T-cell (primary cell): ENCODE measurements at regions of chr5 and their contacts with region 1.

Region 1: GRCh38 chr5:97009212-97009898 is 73.5 kb downstream of the LNPEP start:
- DNase-seq: peak in 2 of 35 experiments; percentile 0 to 68
- ATAC-seq: peak; percentile 55 to 80 (median 76)
- H3K4me3 ChIP-seq: no peak overlapping the region
- H3K4me3 Mint-ChIP-seq: peak overlapping the region; percentile 7 to 48 (median 31)
- H3K27ac ChIP-seq: peak overlapping the region; percentile 23
- H3K27ac Mint-ChIP-seq: peak overlapping the region; percentile 46 to 90
- H3K4me1 ChIP-seq: peaks cover 5 to 25% of the 10 kb centered on the region in 2 experiments
- H3K4me1 Mint-ChIP-seq: peaks cover 27 to 42% (median 31%) of the 10 kb centered on the region in 3 donors
- H3K27me3 ChIP-seq: no peaks in the 10 kb centered on the region
- H3K27me3 Mint-ChIP-seq: no peaks in the 10 kb centered on the region

Region 2: DNA sequence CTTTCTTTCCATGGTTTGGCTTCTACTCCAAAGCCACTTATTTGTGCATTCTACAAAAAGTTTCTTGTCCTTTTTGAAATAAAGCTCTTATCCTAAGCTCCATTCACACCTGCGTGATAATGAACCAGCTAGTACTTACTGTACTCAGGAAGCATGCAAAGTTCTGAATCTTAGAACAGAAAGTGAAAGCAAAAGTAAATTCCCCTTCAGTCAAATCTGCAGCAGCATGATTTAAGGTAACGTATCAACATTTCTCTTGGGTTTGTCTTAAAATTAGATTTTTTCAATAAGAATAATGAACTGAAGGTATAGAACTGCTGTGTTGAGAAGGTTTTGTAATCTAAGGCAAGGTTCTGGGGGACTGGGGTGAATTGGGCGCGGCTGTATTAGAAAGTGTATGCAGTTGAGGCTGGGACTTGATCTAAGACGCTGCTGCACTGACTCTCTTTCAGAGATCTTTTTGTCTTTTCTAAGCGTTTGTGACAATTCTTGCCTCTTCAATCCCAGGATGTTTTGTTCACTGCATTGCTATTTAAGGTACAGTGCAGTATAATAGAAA is 133.0 kb before region 1 on chr5 and contains the start of gene ERAP2:
- CTCF ChIA-PET with region 1: interaction called in 1 of 2 experiments, 4 read pairs
- POLR2A ChIA-PET with region 1: interaction called, 4 to 19 read pairs
- DNase-seq: peak in 8 of 35 experiments; percentile 9 to 76 (median 20)
- ATAC-seq: peak; percentile 72 to 80 (median 78)
- H3K4me3 ChIP-seq: peak within 1 kb of the TSS; percentile 78 to 87
- H3K4me3 Mint-ChIP-seq: peak within 1 kb of the TSS; percentile 92 to 99 (median 96)
- H3K27ac ChIP-seq: peak within 1 kb of the TSS; percentile 87
- H3K27ac Mint-ChIP-seq: peak within 1 kb of the TSS; percentile 97 to 99
- H3K4me1 ChIP-seq: peaks cover 46 to 50% of the 10 kb centered on the region in 2 experiments
- H3K4me1 Mint-ChIP-seq: peaks cover 73 to 78% (median 75%) of the 10 kb centered on the region in 3 donors
- H3K27me3 ChIP-seq: no peaks in the 10 kb centered on the region
- H3K27me3 Mint-ChIP-seq: no peaks in the 10 kb centered on the region
- total RNA-seq, gene ERAP2: 40.4 to 162 (median 71.6) TPM